Activated CD4-positive, alpha-beta memory T cell treated with anti-CD3 and anti-CD28 coated beads for 36 hours (primary cell): ENCODE measurements at regions of chr4 and their contacts with region 1.

Region 1: GRCh38 chr4:15882675-15883086 is 55.9 kb downstream of the FGFBP1 start:
- DNase-seq: peak; percentile 48
- H3K4me3 Mint-ChIP-seq: no peak overlapping the region
- H3K27ac Mint-ChIP-seq: no peak overlapping the region
- H3K4me1 Mint-ChIP-seq: no peaks in the 10 kb centered on the region
- H3K27me3 Mint-ChIP-seq: peaks cover 5% of the 10 kb centered on the region

Region 2: DNA sequence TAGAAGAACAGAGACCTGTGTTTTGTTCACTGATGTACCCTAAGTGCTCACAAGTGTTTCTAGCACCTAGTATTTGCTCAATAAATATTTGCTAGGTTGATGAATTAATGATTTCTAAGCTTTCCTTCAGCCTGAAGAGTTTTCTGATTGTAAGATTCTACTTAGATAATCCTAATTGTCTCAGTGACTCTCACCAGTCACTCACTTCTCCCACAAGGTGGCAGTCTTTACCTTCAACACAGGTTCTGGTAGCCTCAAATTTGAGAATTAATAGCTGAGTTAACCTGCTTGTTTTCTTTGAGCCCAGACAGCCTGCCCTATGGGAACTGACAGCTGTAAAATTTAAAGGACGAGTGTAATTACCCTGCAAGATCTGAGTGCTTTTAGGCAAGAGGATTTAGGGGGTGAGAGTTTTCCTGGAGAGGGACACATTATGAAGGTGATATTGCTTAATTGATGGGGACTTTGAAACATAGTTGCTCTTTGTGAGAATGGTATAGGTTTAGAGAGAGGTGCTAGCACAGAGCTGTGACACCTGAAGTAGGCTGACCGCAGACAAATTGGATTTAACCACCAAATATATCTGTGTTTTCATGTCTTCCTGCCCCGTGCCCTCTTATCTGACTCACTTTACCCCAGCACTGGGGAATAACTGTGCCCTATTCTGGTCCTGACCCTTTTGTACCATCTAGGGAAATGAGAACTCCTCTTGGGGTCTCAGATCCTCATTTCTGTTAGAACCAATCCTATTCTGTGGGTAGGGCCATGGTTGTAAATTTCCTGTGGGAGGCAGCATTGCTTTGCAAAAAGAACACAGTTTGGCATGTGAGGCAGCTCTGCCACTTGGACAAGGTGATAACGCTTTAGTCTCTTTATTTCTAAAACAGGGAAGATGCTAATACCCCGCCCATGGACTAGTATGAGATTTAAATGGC is 76.8 kb before region 1 on chr4:
- CTCF ChIA-PET with region 1: interaction called, 100 read pairs
- POLR2A ChIA-PET with region 1: no interaction called
- intact Hi-C with region 1: loop called (anchors 1 kb)
- DNase-seq: peak; percentile 43
- H3K4me3 Mint-ChIP-seq: no peak overlapping the region
- H3K27ac Mint-ChIP-seq: no peak overlapping the region
- H3K4me1 Mint-ChIP-seq: peaks cover 12% of the 10 kb centered on the region
- H3K27me3 Mint-ChIP-seq: no peaks in the 10 kb centered on the region

Region 3: DNA sequence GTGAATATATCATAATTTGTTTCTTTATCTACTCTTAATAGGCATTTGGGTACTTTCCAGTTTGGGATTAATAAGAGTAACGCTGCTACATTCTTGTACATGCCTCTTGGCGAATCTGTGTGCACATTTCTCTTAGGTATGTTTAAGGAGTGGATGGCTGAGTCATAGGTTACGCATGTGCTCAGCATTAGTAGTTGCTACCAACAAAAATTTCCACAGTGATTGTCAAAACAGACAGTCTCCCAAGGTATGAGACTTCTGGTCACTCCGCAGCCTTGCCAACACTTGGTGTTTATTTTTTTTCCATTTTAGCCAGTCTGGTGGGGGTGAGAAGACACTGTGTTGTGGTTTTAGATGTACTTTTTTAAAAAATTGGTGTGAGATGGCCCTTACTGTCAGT is 11.3 kb after region 1 on chr4:
- CTCF ChIA-PET with region 1: interaction called, 14 read pairs
- POLR2A ChIA-PET with region 1: no interaction called
- intact Hi-C with region 1: no loop called
- DNase-seq: no peak
- H3K4me3 Mint-ChIP-seq: no peak overlapping the region
- H3K27ac Mint-ChIP-seq: no peak overlapping the region
- H3K4me1 Mint-ChIP-seq: no peaks in the 10 kb centered on the region
- H3K27me3 Mint-ChIP-seq: peaks cover 18% of the 10 kb centered on the region

Region 4: GRCh38 chr4:15956179-15956850 is 73.6 kb after region 1 on chr4:
- CTCF ChIA-PET with region 1: interaction called, 145 read pairs
- POLR2A ChIA-PET with region 1: no interaction called
- intact Hi-C with region 1: loop called (anchors 1 kb)
- DNase-seq: peak; percentile 87
- H3K4me3 Mint-ChIP-seq: no peak overlapping the region
- H3K27ac Mint-ChIP-seq: no peak overlapping the region
- H3K4me1 Mint-ChIP-seq: no peaks in the 10 kb centered on the region
- H3K27me3 Mint-ChIP-seq: peaks cover 4% of the 10 kb centered on the region

Region 5: GRCh38 chr4:16006791-16007446 is 124.2 kb after region 1 on chr4:
- CTCF ChIA-PET with region 1: interaction called, 55 read pairs
- POLR2A ChIA-PET with region 1: no interaction called
- intact Hi-C with region 1: no loop called
- DNase-seq: no peak
- H3K4me3 Mint-ChIP-seq: no peak overlapping the region
- H3K27ac Mint-ChIP-seq: no peak overlapping the region
- H3K4me1 Mint-ChIP-seq: no peaks in the 10 kb centered on the region
- H3K27me3 Mint-ChIP-seq: peaks cover 15% of the 10 kb centered on the region